G401 (cell line): ENCODE measurements at regions of chr5 and their contacts with region 1.

Region 1: GRCh38 chr5:37319037-37319782 is 51.7 kb downstream of the NUP155 start:
- DNase-seq: no peak

Region 2: GRCh38 chr5:37174928-37175327 is 144.3 kb before region 1 on chr5:
- in situ Hi-C with region 1: loop called (anchors 10 kb)
- DNase-seq: no peak